Activated CD4-positive, alpha-beta T cell treated with anti-CD3 and anti-CD28 coated beads, Interleukin-2, amount 10 ng/mL, durations not matched to agents 24 days and 14 days (primary cell): ENCODE measurements at regions of chr12 and their contacts with region 1.

Region 1: GRCh38 chr12:68958322-68958721 is 25.4 kb upstream of the CPM start:
- DNase-seq: peak; percentile 77
- H3K4me3 Mint-ChIP-seq: peak overlapping the region; percentile 56
- H3K27ac Mint-ChIP-seq: peak overlapping the region; percentile 93
- H3K4me1 Mint-ChIP-seq: peaks cover 50% of the 10 kb centered on the region
- H3K27me3 Mint-ChIP-seq: no peaks in the 10 kb centered on the region

Region 2: DNA sequence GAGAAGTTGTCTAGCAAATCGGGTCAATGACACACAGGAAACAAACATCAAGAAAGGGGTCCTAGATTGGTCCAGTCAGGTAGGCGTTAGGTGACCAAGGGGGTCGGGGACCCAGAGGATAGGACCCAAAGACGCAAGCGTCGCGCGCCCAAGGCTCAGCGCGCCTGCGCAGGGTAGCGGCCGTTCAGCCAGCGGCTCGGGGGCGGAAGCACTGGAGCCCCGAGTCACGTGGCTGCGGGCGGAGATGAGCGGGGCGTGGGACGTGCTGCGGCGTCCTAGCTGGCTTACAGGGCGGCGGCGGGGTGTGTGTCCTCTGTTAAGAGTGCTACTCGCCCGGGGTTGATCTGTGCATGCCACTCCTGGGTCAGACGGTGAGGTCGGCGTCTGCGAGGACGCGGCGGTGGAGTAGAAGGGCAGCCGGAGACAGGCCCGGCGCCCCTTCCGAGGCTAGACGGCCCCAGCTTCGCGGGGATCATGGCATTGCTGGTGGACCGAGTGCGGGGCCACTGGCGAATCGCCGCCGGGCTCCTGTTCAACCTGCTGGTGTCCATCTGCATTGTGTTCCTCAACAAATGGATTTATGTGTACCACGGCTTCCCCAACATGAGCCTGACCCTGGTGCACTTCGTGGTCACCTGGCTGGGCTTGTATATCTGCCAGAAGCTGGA is 212.3 kb before region 1 on chr12 and contains the start of gene SLC35E3:
- intact Hi-C with region 1: no loop called
- DNase-seq: peak; percentile 98
- H3K4me3 Mint-ChIP-seq: peak within 1 kb of the TSS; percentile 93
- H3K27ac Mint-ChIP-seq: peak within 1 kb of the TSS; percentile 80
- H3K4me1 Mint-ChIP-seq: peaks cover 38% of the 10 kb centered on the region
- H3K27me3 Mint-ChIP-seq: no peaks in the 10 kb centered on the region
- total RNA-seq, gene SLC35E3: 3.8 and 4.2 TPM in 2 replicates

Region 3: GRCh38 chr12:68831272-68831671 is 127.0 kb before region 1 on chr12:
- intact Hi-C with region 1: no loop called
- DNase-seq: peak; percentile 52
- H3K4me3 Mint-ChIP-seq: no peak overlapping the region
- H3K27ac Mint-ChIP-seq: no peak overlapping the region
- H3K4me1 Mint-ChIP-seq: peaks cover 19% of the 10 kb centered on the region
- H3K27me3 Mint-ChIP-seq: no peaks in the 10 kb centered on the region

Region 4: DNA sequence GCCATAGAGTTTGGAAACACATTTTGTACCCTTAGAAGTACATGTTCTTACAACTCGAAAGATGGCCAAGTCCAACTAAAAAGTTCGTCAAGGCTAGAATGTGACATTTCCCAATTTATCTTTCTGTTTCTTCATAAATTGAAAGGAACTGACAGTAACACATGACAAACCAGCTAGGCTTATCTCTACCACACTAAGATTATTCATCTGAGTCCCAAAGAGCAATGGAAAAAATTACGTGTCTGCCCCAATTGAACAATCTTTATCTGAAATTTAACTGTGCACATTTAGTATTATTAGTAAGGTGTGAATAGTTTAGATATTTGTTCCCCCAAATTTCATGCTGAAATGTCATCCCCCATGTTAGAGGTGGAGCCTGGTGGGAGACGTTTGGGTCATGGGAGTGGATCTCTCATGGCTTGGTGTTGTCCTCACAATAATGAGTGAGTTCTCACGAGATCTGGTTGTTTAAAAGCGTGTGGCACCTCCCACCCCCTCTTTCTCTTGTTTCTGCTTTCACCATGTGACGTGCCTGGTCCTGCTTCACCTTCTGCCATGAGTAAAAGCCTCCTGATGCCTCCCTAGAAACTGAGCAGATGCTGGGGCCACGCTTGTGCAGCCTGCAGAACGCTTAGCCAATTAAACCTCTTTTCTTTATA is 38.6 kb before region 1 on chr12:
- intact Hi-C with region 1: loop called (anchors 1 kb)
- DNase-seq: no peak
- H3K4me3 Mint-ChIP-seq: peak overlapping the region; percentile 35
- H3K27ac Mint-ChIP-seq: no peak overlapping the region
- H3K4me1 Mint-ChIP-seq: peaks cover 25% of the 10 kb centered on the region
- H3K27me3 Mint-ChIP-seq: no peaks in the 10 kb centered on the region

Region 5: DNA sequence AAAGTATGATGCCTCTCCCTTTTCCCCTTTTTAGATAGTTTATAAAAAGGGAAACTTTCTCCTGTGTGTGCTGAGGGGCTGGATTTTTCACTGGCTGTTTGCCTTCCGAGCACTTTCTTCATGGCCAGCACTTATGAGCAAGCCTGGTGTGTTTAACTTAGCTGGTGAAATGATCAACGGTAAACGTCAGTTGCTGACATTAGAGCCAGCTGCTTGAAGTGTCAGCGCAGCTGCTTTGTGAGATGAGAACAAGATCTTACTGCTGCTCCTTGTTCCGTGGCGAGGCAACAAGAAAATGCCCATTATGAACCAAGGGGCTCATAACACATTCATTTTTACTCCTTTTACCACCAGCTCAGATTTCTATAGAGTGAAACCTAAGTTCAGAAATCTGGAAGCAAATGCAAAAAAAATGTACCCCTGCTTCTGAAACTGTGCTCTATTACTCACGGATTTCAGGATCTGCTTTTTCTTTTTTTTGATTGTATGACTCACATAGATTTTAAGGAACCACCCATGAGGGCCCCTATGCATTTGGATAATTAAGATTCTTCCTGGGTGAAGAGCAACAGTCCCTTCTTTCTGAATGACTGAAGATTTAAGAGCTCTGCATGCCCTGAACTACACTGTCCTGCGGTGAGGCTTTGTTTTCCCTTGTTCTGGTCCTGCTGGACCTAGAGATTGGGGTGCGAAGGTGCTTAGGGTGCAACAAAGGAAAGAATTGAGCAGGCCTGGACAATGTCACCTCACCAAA is 49.0 kb after region 1 on chr12:
- intact Hi-C with region 1: loop called (anchors 1 kb)
- DNase-seq: no peak
- H3K4me3 Mint-ChIP-seq: peak overlapping the region; percentile 70
- H3K27ac Mint-ChIP-seq: peak overlapping the region; percentile 84
- H3K4me1 Mint-ChIP-seq: peaks cover 15% of the 10 kb centered on the region
- H3K27me3 Mint-ChIP-seq: peaks cover 2% of the 10 kb centered on the region

Region 6: DNA sequence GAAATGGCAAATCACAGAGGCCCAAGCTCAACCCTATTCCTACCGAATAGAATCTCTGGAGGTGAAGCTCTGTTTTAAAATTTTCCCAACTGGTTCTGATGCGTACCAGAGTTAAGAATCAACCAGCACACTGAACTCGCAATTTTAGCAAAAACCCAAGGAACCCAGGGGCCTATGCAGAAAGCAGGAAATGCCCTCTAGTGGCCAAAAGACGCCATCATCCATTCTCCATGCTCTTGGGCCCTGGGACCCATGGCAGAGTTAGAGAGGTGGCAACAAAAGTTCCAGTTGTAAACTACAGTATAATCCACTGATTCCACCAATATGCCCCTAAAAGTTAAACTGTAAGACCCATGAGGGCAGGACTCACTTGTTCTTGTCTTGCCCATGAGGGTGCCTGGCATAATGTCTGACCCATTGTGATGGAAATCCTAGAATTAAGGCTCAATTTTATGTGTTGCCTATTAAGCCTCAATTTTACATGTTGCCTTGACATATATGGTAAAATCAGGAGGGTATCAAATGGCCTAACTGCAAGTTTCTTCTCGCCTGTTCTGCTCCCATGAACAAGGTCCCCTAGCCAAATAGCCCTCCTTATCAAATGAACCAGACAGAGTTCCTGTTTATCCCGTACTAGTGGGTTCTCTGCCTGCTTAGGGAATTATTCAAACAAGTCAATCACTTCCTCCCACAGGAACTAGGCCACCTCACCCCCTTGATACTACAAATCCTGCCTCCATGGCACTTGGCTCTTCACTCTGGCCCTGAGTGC is 112.2 kb after region 1 on chr12:
- intact Hi-C with region 1: loop called (anchors 1 kb)
- DNase-seq: peak; percentile 88
- H3K4me3 Mint-ChIP-seq: no peak overlapping the region
- H3K27ac Mint-ChIP-seq: no peak overlapping the region
- H3K4me1 Mint-ChIP-seq: peaks cover 19% of the 10 kb centered on the region
- H3K27me3 Mint-ChIP-seq: peaks cover 11% of the 10 kb centered on the region